ENCODE measurements at regions of chr9 and their contacts with region 1.

Region 1: GRCh38 chr9:98998441-98999151 is 54.9 kb downstream of the COL15A1 start:
- DNase-seq: peak; percentile 90
- H3K4me3 ChIP-seq: no peak overlapping the region
- H3K27ac ChIP-seq: peak overlapping the region in 1 of 8 donors; percentile 23
- H3K4me1 ChIP-seq: peaks cover 0 to 41% (median 22%) of the 10 kb centered on the region in 6 donors
- H3K27me3 ChIP-seq: peaks cover 0 to 13% (median 0%) of the 10 kb centered on the region in 7 donors
- CTCF ChIP-seq: peak; percentile 60 to 87 (median 82)
- POLR2A ChIP-seq: no peak

Region 2: GRCh38 chr9:98848450-98849149 is 150.0 kb before region 1 on chr9:
- intact Hi-C with region 1: loop called (anchors 5 kb)
- DNase-seq: peak; percentile 94
- H3K4me3 ChIP-seq: peak overlapping the region in 3 of 8 donors; percentile 2 to 25 (median 2)
- H3K27ac ChIP-seq: no peak overlapping the region
- H3K4me1 ChIP-seq: peaks cover 0 to 20% (median 2%) of the 10 kb centered on the region in 6 donors
- H3K27me3 ChIP-seq: peaks cover 0 to under 1% (median 0%) of the 10 kb centered on the region in 7 donors
- CTCF ChIP-seq: peak; percentile 56 to 94 (median 86)
- POLR2A ChIP-seq: no peak

Region 3: GRCh38 chr9:99118782-99119466 is 120.3 kb after region 1 on chr9:
- intact Hi-C with region 1: no loop called
- DNase-seq: peak; percentile 78
- H3K4me3 ChIP-seq: peak overlapping the region in 3 of 8 donors; percentile 2 to 55 (median 5)
- H3K27ac ChIP-seq: peak overlapping the region in 7 of 8 donors; percentile 67 to 87 (median 83)
- H3K4me1 ChIP-seq: peaks cover 26 to 100% (median 72%) of the 10 kb centered on the region in 6 donors
- H3K27me3 ChIP-seq: no peaks in the 10 kb centered on the region
- CTCF ChIP-seq: no peak
- POLR2A ChIP-seq: no peak